OCI-LY7 (cell line): ENCODE measurements at regions of chr1 and their contacts with region 1.

Region 1: GRCh38 chr1:207897188-207897587 is 13.7 kb downstream of the CD34 start:
- DNase-seq: no peak
- H3K4me3 ChIP-seq: no peak overlapping the region
- H3K27ac ChIP-seq: no peak overlapping the region
- H3K4me1 ChIP-seq: no peaks in the 10 kb centered on the region
- CTCF ChIP-seq: peak; percentile 63

Region 2: DNA sequence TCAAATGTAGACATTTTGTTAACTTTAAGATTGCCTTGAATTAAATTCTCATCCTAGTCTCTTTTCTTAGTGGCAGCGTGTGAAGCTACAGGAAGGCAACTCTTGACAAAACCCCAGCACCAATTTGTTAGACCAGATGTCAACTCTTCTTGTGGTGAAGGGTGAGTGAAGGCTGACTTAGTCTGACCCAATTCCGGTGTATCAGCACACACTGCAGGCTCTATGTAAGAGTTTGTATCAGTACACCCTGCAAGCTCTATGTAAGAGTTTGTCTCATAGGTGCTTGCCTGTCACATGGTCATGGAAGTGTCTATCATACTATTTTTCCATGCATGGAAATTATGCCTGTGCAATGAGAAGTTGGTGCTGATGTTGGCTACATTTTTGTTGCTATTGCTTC is 426.3 kb before region 1 on chr1:
- CTCF ChIA-PET with region 1: no interaction called
- POLR2A ChIA-PET with region 1: no interaction called
- intact Hi-C with region 1: no loop called
- DNase-seq: no peak
- H3K4me3 ChIP-seq: no peak overlapping the region
- H3K27ac ChIP-seq: no peak overlapping the region
- H3K4me1 ChIP-seq: no peaks in the 10 kb centered on the region
- CTCF ChIP-seq: no peak

Region 3: GRCh38 chr1:207885129-207886032 is 11.8 kb before region 1 on chr1:
- CTCF ChIA-PET with region 1: interaction called, 6 read pairs
- POLR2A ChIA-PET with region 1: interaction called, 10 read pairs
- intact Hi-C with region 1: no loop called
- DNase-seq: peak; percentile 76
- H3K4me3 ChIP-seq: no peak overlapping the region
- H3K27ac ChIP-seq: no peak overlapping the region
- H3K4me1 ChIP-seq: peaks cover 5% of the 10 kb centered on the region
- CTCF ChIP-seq: peak; percentile 96

Region 4: DNA sequence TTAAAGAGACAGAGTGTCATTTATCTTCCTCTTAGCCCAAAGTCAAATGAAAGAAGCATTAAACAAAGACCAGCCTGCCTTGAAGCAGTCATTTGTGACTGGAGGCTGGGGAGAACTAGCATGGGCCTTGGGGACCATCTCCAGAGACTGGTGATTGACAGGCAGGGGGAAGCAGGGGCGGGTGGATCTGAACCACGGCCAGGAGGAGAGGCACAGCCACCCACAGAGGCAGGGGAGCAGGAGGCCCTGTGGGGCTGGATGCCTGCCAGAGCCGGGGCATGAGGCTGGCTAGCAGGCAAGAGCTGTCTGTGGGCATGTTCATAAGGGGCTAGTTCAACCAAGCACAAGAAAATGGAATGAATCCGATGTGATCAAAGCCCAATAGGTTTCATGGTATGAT is 273.1 kb after region 1 on chr1:
- CTCF ChIA-PET with region 1: no interaction called
- POLR2A ChIA-PET with region 1: no interaction called
- intact Hi-C with region 1: no loop called
- DNase-seq: no peak
- H3K4me3 ChIP-seq: no peak overlapping the region
- H3K27ac ChIP-seq: no peak overlapping the region
- H3K4me1 ChIP-seq: peaks cover 5% of the 10 kb centered on the region
- CTCF ChIP-seq: no peak